ENCODE measurements at regions of chr3 and their contacts with region 1.

Region 1: GRCh38 chr3:179147873-179148615 is at the start of gene PIK3CA:
- DNase-seq: peak; percentile 93
- H3K4me3 Mint-ChIP-seq: peak within 1 kb of the TSS; percentile 97
- H3K27ac Mint-ChIP-seq: peak within 1 kb of the TSS; percentile 94
- H3K4me1 Mint-ChIP-seq: peaks cover 23% of the 10 kb centered on the region
- H3K27me3 Mint-ChIP-seq: peaks cover 25% of the 10 kb centered on the region
- total RNA-seq, gene PIK3CA: 16.3 and 19.6 TPM in 2 replicates

Region 2: GRCh38 chr3:179000144-179000543 is 147.9 kb before region 1 on chr3:
- intact Hi-C with region 1: loop called (anchors 1 kb)
- DNase-seq: no peak
- H3K4me3 Mint-ChIP-seq: no peak overlapping the region
- H3K27ac Mint-ChIP-seq: no peak overlapping the region
- H3K4me1 Mint-ChIP-seq: peaks cover 26% of the 10 kb centered on the region
- H3K27me3 Mint-ChIP-seq: peaks cover 42% of the 10 kb centered on the region

Region 3: GRCh38 chr3:179108086-179108485 is 40.0 kb before region 1 on chr3:
- intact Hi-C with region 1: loop called (anchors 5 kb)
- DNase-seq: no peak
- H3K4me3 Mint-ChIP-seq: no peak overlapping the region
- H3K27ac Mint-ChIP-seq: no peak overlapping the region
- H3K4me1 Mint-ChIP-seq: peaks cover 5% of the 10 kb centered on the region
- H3K27me3 Mint-ChIP-seq: peaks cover 33% of the 10 kb centered on the region

Region 4: GRCh38 chr3:179236669-179237301 is 88.7 kb after region 1 on chr3:
- intact Hi-C with region 1: loop called (anchors 1 kb)
- DNase-seq: no peak
- H3K4me3 Mint-ChIP-seq: no peak overlapping the region
- H3K27ac Mint-ChIP-seq: peak overlapping the region; percentile 64
- H3K4me1 Mint-ChIP-seq: peaks cover 8% of the 10 kb centered on the region
- H3K27me3 Mint-ChIP-seq: no peaks in the 10 kb centered on the region

Region 5: DNA sequence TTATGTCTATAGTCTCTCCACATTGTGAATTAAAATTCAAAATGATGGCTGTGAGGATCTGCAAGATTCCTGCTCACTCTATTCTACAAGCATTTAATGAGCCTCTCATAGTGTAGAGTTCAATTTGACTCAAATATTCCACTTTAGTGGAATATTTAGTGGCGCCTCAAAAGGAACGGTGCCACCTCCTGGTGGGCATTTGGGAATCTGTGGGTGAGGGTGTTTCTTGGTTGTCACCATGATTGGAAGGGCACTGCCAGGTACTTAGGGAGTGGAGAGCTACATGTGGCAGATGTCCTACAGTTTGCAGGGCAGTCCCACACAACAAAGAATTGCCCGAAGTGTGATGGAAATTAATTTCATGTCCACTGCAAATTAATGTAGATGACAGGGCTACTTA is 124.3 kb after region 1 on chr3:
- intact Hi-C with region 1: no loop called
- DNase-seq: no peak
- H3K4me3 Mint-ChIP-seq: no peak overlapping the region
- H3K27ac Mint-ChIP-seq: no peak overlapping the region
- H3K4me1 Mint-ChIP-seq: no peaks in the 10 kb centered on the region
- H3K27me3 Mint-ChIP-seq: peaks cover 9% of the 10 kb centered on the region

Region 6: DNA sequence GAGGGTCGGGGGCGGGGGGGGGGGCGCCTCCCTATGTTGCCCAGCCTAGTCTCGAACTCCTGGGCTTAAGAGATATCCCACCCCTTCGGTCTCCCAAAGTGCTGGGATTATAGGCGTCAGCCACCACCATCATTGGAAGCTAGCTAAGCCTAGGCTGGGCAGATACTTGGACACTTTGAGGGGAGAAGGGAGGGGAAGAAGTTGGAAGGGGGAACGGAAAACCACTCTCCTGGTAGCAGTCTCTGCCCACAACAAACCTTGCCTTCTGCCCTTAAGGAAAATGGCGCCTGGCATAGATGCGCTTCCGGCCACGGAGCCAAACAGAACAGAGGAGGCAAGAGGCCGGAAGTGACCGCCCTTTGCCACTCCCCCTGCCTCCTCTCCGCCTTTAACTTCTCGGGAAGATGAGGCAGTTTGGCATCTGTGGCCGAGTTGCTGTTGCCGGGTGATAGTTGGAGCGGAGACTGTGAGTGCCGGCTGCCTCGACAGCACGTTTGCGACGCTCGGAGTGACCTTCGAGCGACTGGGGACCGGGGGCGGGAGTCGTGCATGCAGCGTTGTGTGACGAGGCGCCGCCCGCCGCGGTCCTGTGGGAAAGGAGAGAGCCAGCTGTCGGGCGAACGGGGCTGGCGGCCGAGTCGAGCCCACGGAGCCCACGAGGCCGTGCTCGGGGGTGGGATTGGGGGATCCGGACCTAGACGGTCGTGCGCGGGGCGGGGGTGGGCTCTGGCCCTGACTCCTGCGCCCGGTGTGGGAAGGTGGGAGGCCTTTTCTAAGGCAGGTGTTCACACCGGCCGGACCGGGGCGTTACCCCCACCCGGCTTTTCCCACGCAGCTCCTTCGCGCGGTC is 199.5 kb after region 1 on chr3 and contains the start of gene MFN1:
- intact Hi-C with region 1: loop called (anchors 1 kb)
- DNase-seq: peak; percentile 88
- H3K4me3 Mint-ChIP-seq: peak within 1 kb of the TSS; percentile 91
- H3K27ac Mint-ChIP-seq: peak within 1 kb of the TSS; percentile 89
- H3K4me1 Mint-ChIP-seq: peaks cover 15% of the 10 kb centered on the region
- H3K27me3 Mint-ChIP-seq: no peaks in the 10 kb centered on the region
- total RNA-seq, gene MFN1: 32.2 and 38.2 TPM in 2 replicates

Region 7: GRCh38 chr3:179604321-179605078 is 456.5 kb after region 1 on chr3 and contains the starts of genes MRPL47 and NDUFB5:
- intact Hi-C with region 1: loop called (anchors 1 kb)
- DNase-seq: peak; percentile 91
- H3K4me3 Mint-ChIP-seq: peak within 1 kb of the TSS; percentile 99
- H3K27ac Mint-ChIP-seq: peak within 1 kb of the TSS; percentile 99
- H3K4me1 Mint-ChIP-seq: peaks cover 31% of the 10 kb centered on the region
- H3K27me3 Mint-ChIP-seq: no peaks in the 10 kb centered on the region
- total RNA-seq, gene MRPL47: 61.2 and 64.4 TPM in 2 replicates
- total RNA-seq, gene NDUFB5: 90.3 and 91.6 TPM in 2 replicates